ENCODE measurements at regions of chr1 and their contacts with region 1.

Region 1: GRCh38 chr1:180178511-180179161 is 24.0 kb downstream of the QSOX1 start:
- DNase-seq: peak; percentile 74
- H3K4me3 ChIP-seq: no peak overlapping the region
- H3K27ac ChIP-seq: no peak overlapping the region
- H3K4me1 ChIP-seq: no peaks in the 10 kb centered on the region
- H3K27me3 ChIP-seq: no peaks in the 10 kb centered on the region
- CTCF ChIP-seq: peak; percentile 92

Region 2: GRCh38 chr1:179867807-179868330 is 310.8 kb before region 1 on chr1:
- intact Hi-C with region 1: loop called (anchors 5 kb)
- DNase-seq: peak; percentile 47
- H3K4me3 ChIP-seq: no peak overlapping the region
- H3K27ac ChIP-seq: no peak overlapping the region
- H3K4me1 ChIP-seq: no peaks in the 10 kb centered on the region
- H3K27me3 ChIP-seq: no peaks in the 10 kb centered on the region
- CTCF ChIP-seq: peak; percentile 65

Region 3: GRCh38 chr1:180062452-180062975 is 116.1 kb before region 1 on chr1:
- intact Hi-C with region 1: loop called (anchors 10 kb)
- DNase-seq: no peak
- H3K4me3 ChIP-seq: no peak overlapping the region
- H3K27ac ChIP-seq: no peak overlapping the region
- H3K4me1 ChIP-seq: no peaks in the 10 kb centered on the region
- H3K27me3 ChIP-seq: no peaks in the 10 kb centered on the region
- CTCF ChIP-seq: no peak

Measured in colonic mucosa (tissue), 4 donors.